Aorta (tissue), 5 donors: ENCODE measurements at regions of chr1 and their contacts with region 1.

Region 1: DNA sequence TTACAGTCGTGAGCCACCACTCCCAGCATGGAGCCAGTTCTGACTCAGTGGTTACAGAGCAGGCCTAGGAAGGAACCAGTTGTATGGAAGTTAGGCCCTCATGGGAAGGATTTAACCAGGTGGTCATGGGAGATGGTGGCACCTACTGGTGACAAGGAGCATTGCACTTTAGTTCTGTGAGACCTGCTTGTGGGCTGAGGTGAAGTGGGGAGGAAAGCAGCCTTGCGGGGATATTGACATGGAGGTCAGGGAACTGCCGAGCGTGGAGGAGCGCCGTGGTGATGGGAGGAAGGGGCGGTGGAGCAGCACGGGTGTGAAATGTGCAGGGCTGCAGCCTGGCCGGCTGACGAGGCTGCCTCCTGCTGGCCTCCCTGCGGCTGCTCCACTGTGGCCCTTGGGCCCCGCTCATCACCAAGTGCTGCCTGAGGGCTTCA is 100.4 kb downstream of the GALNT2 start:
- DNase-seq: no peak
- ATAC-seq: peak; percentile 31
- H3K4me3 ChIP-seq: no peak overlapping the region
- H3K27ac ChIP-seq: no peak overlapping the region
- H3K4me1 ChIP-seq: peaks cover 3 to 9% of the 10 kb centered on the region in 2 donors
- H3K27me3 ChIP-seq: no peaks in the 10 kb centered on the region

Region 2: DNA sequence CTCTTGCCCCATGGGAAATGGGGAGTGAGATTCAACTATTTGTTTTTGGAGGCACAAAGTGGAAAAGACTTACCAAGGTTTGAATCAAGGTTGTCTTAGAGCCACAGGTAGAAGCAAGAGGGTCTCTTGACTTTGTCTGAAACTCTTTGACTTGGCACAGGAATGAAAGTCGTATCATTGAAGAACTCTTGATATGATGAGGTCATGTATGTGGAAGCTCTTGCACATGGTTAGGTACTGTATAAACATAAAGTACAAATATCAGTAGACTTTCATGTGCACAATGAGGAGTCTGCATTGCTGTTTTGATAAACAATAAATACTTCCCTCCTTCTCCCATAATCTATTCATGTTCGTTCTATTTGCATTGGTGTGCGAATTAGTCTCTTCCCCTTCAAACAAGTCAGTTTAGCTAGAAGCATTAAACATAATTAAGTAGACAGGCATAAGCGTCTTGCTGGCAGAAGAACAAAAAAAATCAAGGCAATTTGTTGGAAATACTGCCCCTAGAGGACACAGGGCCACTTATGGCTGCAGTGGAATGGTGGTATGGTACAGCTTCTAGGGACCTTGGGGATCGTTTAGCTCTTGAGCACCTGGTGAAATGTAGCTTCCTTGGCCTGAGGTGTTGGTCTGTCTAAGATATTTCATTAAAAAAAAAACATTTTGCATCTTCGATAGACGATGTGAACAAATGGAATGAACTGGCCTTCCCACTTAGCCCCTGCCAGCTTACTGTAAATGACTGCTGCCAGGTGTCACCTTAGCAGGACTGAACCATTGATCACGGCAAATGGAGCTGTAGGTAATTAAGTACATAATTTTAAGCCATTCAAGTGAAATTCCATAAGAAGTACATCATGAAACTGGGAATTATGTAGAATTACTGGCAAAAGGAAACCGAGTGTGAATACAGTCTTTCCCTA is 318.4 kb before region 1 on chr1:
- intact Hi-C with region 1: loop called in 1 of 2 experiments (anchors 5 kb)
- DNase-seq: no peak
- ATAC-seq: no peak
- H3K4me3 ChIP-seq: no peak overlapping the region
- H3K27ac ChIP-seq: no peak overlapping the region
- H3K4me1 ChIP-seq: peaks cover 6 to 7% of the 10 kb centered on the region in 2 donors
- H3K27me3 ChIP-seq: no peaks in the 10 kb centered on the region